ENCODE measurements at regions of chr4 and their contacts with region 1.

Region 1: GRCh38 chr4:22389240-22389870 is 126.5 kb downstream of the ADGRA3 start:
- DNase-seq: peak; percentile 28
- ATAC-seq: peak in 1 of 2 donors; percentile 61

Region 2: DNA sequence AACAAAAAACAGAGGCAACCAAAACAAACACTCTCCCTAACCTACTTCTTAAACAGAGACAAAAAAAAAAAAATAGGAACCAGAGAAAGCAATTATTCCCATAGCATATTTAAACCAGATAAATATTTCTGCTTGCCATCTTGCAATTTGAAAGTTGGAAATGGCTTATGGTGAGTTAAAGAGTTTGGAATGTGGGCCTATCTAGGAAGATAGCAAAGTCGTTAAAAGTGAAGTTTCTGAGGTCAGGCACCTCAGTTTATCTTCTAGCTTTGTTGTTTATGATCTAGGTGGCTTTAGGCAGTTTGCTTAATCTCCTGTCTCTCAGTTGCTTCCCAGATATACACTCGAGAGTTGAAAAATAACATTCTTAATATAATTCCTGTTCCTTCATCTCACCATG is 725.0 kb before region 1 on chr4:
- intact Hi-C with region 1: no loop called
- DNase-seq: no peak
- ATAC-seq: no peak

Region 3: DNA sequence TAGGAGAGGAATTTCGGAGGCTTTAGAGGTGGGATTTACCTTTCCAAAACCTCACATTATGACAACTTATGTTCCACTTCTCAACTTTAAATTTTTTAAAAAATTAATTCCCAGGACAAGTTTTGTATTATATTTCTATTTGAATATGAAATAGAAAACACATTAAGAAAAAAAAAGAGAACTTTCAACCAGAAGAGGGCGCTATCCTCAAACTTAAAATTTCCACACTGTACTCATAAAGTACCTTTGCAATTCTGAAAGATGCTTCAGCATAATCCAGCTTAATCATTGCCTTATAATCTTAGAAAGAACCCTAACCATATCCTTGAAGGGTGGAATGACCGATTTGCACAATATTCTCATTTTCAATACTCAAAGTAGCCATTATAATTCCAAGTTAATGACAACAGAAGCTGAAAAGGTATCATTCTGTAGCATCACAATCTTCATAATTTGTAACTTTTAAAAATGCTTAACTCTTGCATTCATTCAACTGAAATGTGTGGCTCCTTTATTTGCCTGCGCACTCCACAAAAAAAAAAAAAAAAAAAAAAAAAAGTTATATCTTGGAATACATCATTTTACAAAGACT is 598.8 kb before region 1 on chr4:
- intact Hi-C with region 1: loop called (anchors 2 to 10 kb)
- DNase-seq: no peak
- ATAC-seq: no peak

Region 4: GRCh38 chr4:22730021-22730420 is 340.7 kb after region 1 on chr4:
- intact Hi-C with region 1: no loop called
- DNase-seq: no peak
- ATAC-seq: no peak

Measured in left cardiac atrium (tissue), 4 donors.